ENCODE measurements at regions of chr7 and their contacts with region 1.

Region 1: DNA sequence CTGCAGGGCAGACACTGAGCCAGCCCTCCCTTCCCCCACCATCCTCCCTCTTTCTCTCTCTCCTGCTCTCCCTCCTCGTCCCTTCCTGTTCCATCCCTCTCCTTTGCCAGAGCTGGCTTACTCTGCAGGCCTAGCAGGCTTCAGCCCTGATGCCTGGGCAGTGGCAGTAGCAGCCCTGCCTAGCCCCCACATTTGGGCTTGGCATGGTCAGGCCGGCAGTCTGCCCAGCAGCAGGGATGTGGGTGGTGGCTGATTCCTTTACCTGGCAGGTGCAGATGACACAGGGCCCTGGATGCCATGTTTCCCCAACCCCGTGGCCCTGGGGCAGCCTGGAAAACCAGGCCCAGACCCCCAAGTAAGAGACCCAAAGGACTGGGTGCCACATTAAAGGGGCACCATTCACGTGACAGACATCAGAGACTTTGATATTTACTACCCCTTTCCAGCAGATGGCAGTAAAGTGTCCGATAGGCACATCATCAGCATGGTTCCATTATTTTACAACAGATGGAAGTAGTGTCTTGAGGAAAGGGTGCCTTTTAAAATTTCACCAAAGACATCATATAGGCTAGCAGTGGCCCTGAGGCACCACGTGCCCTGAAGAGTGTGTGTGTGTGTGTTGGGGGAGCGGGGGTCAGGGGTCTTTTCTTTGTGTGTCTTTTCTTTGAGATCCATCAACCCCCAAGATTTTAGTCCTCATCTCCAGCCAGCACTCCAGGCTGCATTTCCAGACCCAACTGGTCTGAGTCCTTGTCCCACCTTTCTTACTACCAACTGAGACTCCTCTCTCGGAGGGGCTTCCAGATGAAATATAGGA is 5.9 kb downstream of the KCP start:
- DNase-seq: no peak
- H3K4me3 ChIP-seq: no peak overlapping the region
- H3K27ac ChIP-seq: no peak overlapping the region
- H3K4me1 ChIP-seq: no peaks in the 10 kb centered on the region
- H3K27me3 ChIP-seq: no peaks in the 10 kb centered on the region
- CTCF ChIP-seq: peak in 1 of 3 donors; percentile 11
- EP300 ChIP-seq: no peak
- POLR2A ChIP-seq: no peak

Region 2: DNA sequence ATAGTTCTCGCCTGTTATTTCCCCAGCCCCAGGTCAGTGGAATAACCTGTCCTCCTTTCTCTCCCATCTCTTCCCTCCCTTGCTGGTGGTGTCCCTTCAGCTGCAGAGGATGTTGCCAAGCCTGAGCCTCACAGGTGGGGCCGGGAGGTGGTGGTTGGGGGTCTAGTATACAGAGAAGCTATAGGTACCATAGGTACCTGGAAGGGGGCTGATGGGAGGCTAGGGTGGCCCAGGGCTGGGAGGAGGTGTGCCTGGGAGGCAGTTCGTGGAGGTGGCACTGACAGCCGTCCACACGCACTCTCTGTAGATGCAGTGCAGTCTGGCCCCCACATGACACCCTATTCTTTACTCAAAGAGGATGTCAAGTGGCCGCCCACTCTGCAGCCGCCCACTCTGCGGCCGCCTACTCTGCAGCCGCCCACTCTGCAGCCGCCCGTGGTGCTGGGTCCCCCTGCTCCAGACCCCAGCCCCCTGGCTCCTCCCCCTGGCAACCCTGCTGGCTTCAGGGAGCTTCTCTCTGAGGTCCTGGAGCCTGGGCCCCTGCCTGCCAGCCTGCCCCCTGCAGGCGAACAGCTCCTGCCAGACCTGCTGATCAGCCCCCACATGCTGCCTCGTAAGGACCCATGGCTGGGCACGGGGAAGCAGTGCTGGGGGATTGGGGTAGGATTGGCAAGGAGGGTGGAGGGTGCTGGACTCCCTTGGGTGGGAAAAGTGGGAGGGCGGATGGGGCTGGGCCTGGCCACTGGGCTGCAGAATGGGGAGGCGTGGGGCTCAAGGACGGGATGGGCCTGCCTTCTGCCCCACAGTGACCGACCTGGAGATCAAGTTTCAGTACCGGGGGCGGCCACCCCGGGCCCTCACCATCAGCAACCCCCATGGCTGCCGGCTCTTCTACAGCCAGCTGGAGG is 42.6 kb after region 1 on chr7:
- intact Hi-C with region 1: no loop called
- DNase-seq: no peak
- H3K4me3 ChIP-seq: no peak overlapping the region
- H3K27ac ChIP-seq: no peak overlapping the region
- H3K4me1 ChIP-seq: no peaks in the 10 kb centered on the region
- H3K27me3 ChIP-seq: no peaks in the 10 kb centered on the region
- CTCF ChIP-seq: no peak
- EP300 ChIP-seq: no peak
- POLR2A ChIP-seq: no peak

Region 3: DNA sequence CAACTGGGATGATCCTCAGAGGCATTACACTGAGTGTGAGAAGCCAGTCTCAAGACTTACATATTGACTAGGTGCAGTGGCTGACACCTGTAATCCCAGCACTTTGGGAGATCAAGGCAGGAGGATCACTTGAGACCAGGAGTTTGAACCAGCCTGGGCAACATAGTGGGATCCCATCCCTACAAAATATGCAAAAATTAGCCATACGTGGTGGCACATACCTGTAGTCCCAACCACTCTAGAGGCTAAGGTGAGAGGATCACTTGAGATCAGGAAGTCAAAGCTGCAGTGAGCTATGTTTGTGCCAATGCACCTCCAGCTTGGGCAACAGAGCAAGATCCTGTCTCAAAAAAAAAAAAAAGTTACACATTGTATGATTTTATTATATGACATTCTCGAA is 173.9 kb after region 1 on chr7:
- intact Hi-C with region 1: loop called in 1 of 4 experiments (anchors 5 kb)
- DNase-seq: no peak
- H3K4me3 ChIP-seq: no peak overlapping the region
- H3K27ac ChIP-seq: no peak overlapping the region
- H3K4me1 ChIP-seq: no peaks in the 10 kb centered on the region
- H3K27me3 ChIP-seq: no peaks in the 10 kb centered on the region
- CTCF ChIP-seq: no peak
- EP300 ChIP-seq: no peak
- POLR2A ChIP-seq: no peak

Region 4: GRCh38 chr7:129091484-129092002 is 187.0 kb after region 1 on chr7:
- intact Hi-C with region 1: loop called in 2 of 4 experiments (anchors 5 to 10 kb)
- DNase-seq: peak; percentile 56 to 87 (median 76)
- H3K4me3 ChIP-seq: no peak overlapping the region
- H3K27ac ChIP-seq: no peak overlapping the region
- H3K4me1 ChIP-seq: no peaks in the 10 kb centered on the region
- H3K27me3 ChIP-seq: no peaks in the 10 kb centered on the region
- CTCF ChIP-seq: peak; percentile 63 to 74 (median 66)
- EP300 ChIP-seq: no peak
- POLR2A ChIP-seq: no peak

Measured in ovary (tissue), 10 donors.